CD8-positive, alpha-beta T cell (primary cell): ENCODE measurements at regions of chr10 and their contacts with region 1.

Region 1: GRCh38 chr10:63227207-63227915 is 94.2 kb downstream of the NRBF2 start:
- DNase-seq: peak in 2 of 9 experiments; percentile 30 to 59
- ATAC-seq: peak; percentile 36
- H3K4me3 ChIP-seq: no peak overlapping the region
- H3K4me3 Mint-ChIP-seq: peak overlapping the region; percentile 61
- H3K27ac ChIP-seq: peak overlapping the region in 1 of 2 experiments; percentile 49
- H3K27ac Mint-ChIP-seq: peak overlapping the region; percentile 88
- H3K4me1 ChIP-seq: peaks cover 42% of the 10 kb centered on the region
- H3K4me1 Mint-ChIP-seq: peaks cover 72% of the 10 kb centered on the region
- H3K27me3 ChIP-seq: no peaks in the 10 kb centered on the region
- H3K27me3 Mint-ChIP-seq: no peaks in the 10 kb centered on the region
- CTCF ChIP-seq: no peak

Region 2: GRCh38 chr10:63157845-63158624 is 69.3 kb before region 1 on chr10:
- CTCF ChIA-PET with region 1: no interaction called
- POLR2A ChIA-PET with region 1: no interaction called
- intact Hi-C with region 1: no loop called
- DNase-seq: peak in 8 of 9 experiments; percentile 13 to 88 (median 48)
- ATAC-seq: peak; percentile 74
- H3K4me3 ChIP-seq: no peak overlapping the region
- H3K4me3 Mint-ChIP-seq: no peak overlapping the region
- H3K27ac ChIP-seq: no peak overlapping the region
- H3K27ac Mint-ChIP-seq: no peak overlapping the region
- H3K4me1 ChIP-seq: no peaks in the 10 kb centered on the region
- H3K4me1 Mint-ChIP-seq: peaks cover 11% of the 10 kb centered on the region
- H3K27me3 ChIP-seq: no peaks in the 10 kb centered on the region
- H3K27me3 Mint-ChIP-seq: no peaks in the 10 kb centered on the region
- CTCF ChIP-seq: peak; percentile 79

Region 3: GRCh38 chr10:63173468-63174232 is 53.7 kb before region 1 on chr10:
- CTCF ChIA-PET with region 1: no interaction called
- POLR2A ChIA-PET with region 1: no interaction called
- intact Hi-C with region 1: no loop called
- DNase-seq: no peak
- ATAC-seq: no peak
- H3K4me3 ChIP-seq: no peak overlapping the region
- H3K4me3 Mint-ChIP-seq: no peak overlapping the region
- H3K27ac ChIP-seq: no peak overlapping the region
- H3K27ac Mint-ChIP-seq: peak overlapping the region; percentile 9
- H3K4me1 ChIP-seq: no peaks in the 10 kb centered on the region
- H3K4me1 Mint-ChIP-seq: peaks cover 14% of the 10 kb centered on the region
- H3K27me3 ChIP-seq: no peaks in the 10 kb centered on the region
- H3K27me3 Mint-ChIP-seq: no peaks in the 10 kb centered on the region
- CTCF ChIP-seq: no peak

Region 4: DNA sequence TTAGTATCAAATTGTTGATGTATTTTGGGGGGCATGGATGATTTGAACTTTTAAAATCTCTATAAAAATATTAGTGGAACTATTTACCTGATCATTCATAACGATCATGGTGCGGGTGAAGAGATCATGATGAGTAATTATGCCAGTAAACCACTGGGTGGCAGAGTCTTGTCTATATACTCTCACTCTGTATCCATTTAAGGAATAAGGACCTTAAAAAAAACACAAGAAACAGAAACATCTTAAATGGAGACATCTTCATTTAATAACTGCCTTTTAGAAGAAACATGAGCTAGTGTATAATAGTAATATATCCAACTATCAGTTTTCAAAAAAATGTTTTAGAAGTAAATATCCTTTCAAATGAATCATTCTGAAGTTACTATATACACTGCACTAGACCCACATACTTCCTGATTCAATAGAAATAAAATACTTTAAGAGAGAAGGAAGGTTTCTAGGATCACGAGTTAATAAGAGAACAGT is 10.2 kb before region 1 on chr10:
- CTCF ChIA-PET with region 1: interaction called, 9 read pairs
- POLR2A ChIA-PET with region 1: no interaction called
- intact Hi-C with region 1: loop called in 1 of 2 experiments (anchors 1 kb)
- DNase-seq: peak in 3 of 9 experiments; percentile 20 to 77 (median 62)
- ATAC-seq: peak; percentile 86
- H3K4me3 ChIP-seq: no peak overlapping the region
- H3K4me3 Mint-ChIP-seq: no peak overlapping the region
- H3K27ac ChIP-seq: no peak overlapping the region
- H3K27ac Mint-ChIP-seq: no peak overlapping the region
- H3K4me1 ChIP-seq: peaks cover 9% of the 10 kb centered on the region
- H3K4me1 Mint-ChIP-seq: peaks cover 52% of the 10 kb centered on the region
- H3K27me3 ChIP-seq: no peaks in the 10 kb centered on the region
- H3K27me3 Mint-ChIP-seq: no peaks in the 10 kb centered on the region
- CTCF ChIP-seq: peak; percentile 93

Region 5: GRCh38 chr10:63241841-63242281 is 14.5 kb after region 1 on chr10:
- CTCF ChIA-PET with region 1: interaction called, 3 read pairs
- POLR2A ChIA-PET with region 1: interaction called, 4 read pairs
- intact Hi-C with region 1: loop called in 1 of 2 experiments (anchors 1 kb)
- DNase-seq: peak in 1 of 9 experiments; percentile 40
- ATAC-seq: peak; percentile 44
- H3K4me3 ChIP-seq: no peak overlapping the region
- H3K4me3 Mint-ChIP-seq: peak overlapping the region; percentile 61
- H3K27ac ChIP-seq: peak overlapping the region in 1 of 2 experiments; percentile 46
- H3K27ac Mint-ChIP-seq: peak overlapping the region; percentile 75
- H3K4me1 ChIP-seq: peaks cover 60% of the 10 kb centered on the region
- H3K4me1 Mint-ChIP-seq: peaks cover 74% of the 10 kb centered on the region
- H3K27me3 ChIP-seq: no peaks in the 10 kb centered on the region
- H3K27me3 Mint-ChIP-seq: no peaks in the 10 kb centered on the region
- CTCF ChIP-seq: no peak

Region 6: GRCh38 chr10:63252095-63252762 is 24.9 kb after region 1 on chr10:
- CTCF ChIA-PET with region 1: no interaction called
- POLR2A ChIA-PET with region 1: no interaction called
- intact Hi-C with region 1: loop called in 1 of 2 experiments (anchors 2 kb)
- DNase-seq: no peak
- ATAC-seq: no peak
- H3K4me3 ChIP-seq: no peak overlapping the region
- H3K4me3 Mint-ChIP-seq: no peak overlapping the region
- H3K27ac ChIP-seq: peak overlapping the region in 1 of 2 experiments; percentile 37
- H3K27ac Mint-ChIP-seq: peak overlapping the region; percentile 56
- H3K4me1 ChIP-seq: peaks cover 16% of the 10 kb centered on the region
- H3K4me1 Mint-ChIP-seq: peaks cover 71% of the 10 kb centered on the region
- H3K27me3 ChIP-seq: no peaks in the 10 kb centered on the region
- H3K27me3 Mint-ChIP-seq: no peaks in the 10 kb centered on the region
- CTCF ChIP-seq: no peak